Transverse colon (tissue), 4 donors: ENCODE measurements at regions of chr3 and their contacts with region 1.

Region 1: DNA sequence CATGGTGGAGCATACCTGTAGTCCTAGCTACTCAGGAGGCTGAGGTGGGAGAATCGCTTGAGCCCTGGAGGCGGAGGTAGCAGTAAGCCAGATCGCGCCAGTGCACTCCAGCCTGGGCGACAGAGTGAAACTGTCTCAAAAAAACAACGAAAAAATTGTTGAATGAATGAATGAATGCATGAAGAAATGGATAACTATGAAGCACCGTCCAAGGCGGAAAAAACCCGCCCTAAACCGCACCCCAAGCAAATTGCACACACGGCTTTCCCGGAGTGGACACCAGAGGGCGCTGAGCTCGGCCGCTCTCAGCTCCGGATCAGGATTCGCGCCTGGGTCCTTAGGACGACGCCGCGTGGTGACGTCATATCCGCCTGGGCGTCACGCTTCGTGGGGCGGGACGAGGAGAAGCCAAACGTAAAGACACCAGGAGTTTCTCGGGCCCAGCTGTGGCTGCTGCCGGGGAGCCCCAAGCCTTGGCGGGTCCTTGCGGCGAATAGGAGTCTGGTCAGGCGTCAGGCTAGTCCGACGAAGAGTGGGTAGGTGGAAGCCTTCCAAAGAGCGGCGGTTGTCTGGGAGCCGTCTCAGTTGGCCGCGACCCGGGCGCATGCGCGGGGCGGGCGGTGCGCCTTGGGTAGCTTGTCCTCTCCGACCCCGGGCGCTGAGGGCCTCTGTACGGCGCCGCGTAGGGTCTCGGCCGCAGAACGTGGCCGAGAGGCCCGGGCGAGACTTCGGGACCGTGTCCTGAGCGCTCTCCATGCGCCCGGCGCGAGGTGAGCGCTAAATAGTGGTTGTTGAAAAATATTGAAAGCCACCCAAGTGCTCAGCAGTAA is at the starts of genes HTD2 and RPP14:
- DNase-seq: peak; percentile 99
- H3K4me3 ChIP-seq: peak within 1 kb of the TSS; percentile 65 to 92 (median 87)
- H3K27ac ChIP-seq: peak within 1 kb of the TSS; percentile 95 to 96 (median 96)
- H3K4me1 ChIP-seq: peaks cover 12 to 27% (median 23%) of the 10 kb centered on the region in 4 donors
- H3K27me3 ChIP-seq: peaks cover 9% of the 10 kb centered on the region
- CTCF ChIP-seq: peak; percentile 90 to 99 (median 97)
- EP300 ChIP-seq: no peak
- POLR2A ChIP-seq: peak; percentile 89
- total RNA-seq, gene HTD2: 11.1 to 16.9 (median 16.7) TPM in 3 of 4 donors, not detected in the other
- total RNA-seq, gene RPP14: 9.2 to 25.1 (median 18.8) TPM

Region 2: DNA sequence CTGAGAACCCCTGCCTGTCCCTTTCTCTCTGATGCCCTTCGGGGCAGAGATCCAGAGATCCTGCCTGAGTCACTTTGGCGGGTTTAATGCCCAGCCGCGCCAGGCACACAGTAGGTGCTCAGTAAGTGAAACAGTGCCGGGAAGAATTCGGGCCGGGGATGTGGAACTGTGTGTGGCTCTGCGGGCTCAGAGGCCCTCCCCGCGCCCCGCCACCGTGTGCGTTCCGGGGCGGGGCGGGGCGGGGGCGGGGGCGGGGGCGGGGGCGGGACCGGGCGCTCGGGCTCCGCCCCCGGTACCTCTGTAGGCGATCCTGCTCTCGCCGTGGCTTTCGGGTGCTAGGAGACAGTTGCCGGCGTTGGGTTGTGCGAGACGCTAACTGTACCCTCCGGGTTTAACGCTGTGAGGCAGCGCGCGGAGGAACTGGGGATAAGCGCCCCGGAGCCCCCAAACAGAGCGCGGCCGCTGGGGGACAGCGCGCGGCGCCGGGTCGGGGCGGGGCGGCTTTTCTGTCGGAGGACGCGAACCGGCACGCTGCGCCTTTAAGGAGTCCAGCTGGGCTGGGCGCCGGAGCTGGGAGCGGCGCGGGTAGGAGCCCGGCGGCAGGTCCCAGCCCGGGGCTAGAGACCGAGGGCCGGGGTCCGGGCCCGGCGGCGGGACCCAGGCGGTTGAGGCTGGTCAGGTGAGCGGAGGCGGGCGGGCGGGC is 68.7 kb before region 1 on chr3 and contains the start of gene ABHD6:
- in situ Hi-C with region 1: no loop called
- intact Hi-C with region 1: loop called (anchors 5 kb)
- DNase-seq: peak; percentile 82
- H3K4me3 ChIP-seq: peak within 1 kb of the TSS; percentile 61 to 90 (median 82)
- H3K27ac ChIP-seq: peak within 1 kb of the TSS; percentile 89 to 91 (median 90)
- H3K4me1 ChIP-seq: peaks cover 0 to 28% (median 21%) of the 10 kb centered on the region in 4 donors
- H3K27me3 ChIP-seq: no peaks in the 10 kb centered on the region
- CTCF ChIP-seq: peak in 2 of 5 experiments; percentile 4 to 18
- EP300 ChIP-seq: no peak
- POLR2A ChIP-seq: no peak
- total RNA-seq, gene ABHD6: 5.2 to 68.1 (median 32.0) TPM